Transverse colon (tissue), 4 donors: ENCODE measurements at regions of chr5 and their contacts with region 1.

Region 1: GRCh38 chr5:177094224-177095087 is 7.7 kb downstream of the FGFR4 start:
- DNase-seq: peak; percentile 73
- H3K4me3 ChIP-seq: no peak overlapping the region
- H3K27ac ChIP-seq: peak overlapping the region; percentile 49 to 72 (median 66)
- H3K4me1 ChIP-seq: peaks cover 2 to 51% (median 33%) of the 10 kb centered on the region in 4 donors
- H3K27me3 ChIP-seq: no peaks in the 10 kb centered on the region
- CTCF ChIP-seq: no peak
- EP300 ChIP-seq: no peak
- POLR2A ChIP-seq: no peak

Region 2: DNA sequence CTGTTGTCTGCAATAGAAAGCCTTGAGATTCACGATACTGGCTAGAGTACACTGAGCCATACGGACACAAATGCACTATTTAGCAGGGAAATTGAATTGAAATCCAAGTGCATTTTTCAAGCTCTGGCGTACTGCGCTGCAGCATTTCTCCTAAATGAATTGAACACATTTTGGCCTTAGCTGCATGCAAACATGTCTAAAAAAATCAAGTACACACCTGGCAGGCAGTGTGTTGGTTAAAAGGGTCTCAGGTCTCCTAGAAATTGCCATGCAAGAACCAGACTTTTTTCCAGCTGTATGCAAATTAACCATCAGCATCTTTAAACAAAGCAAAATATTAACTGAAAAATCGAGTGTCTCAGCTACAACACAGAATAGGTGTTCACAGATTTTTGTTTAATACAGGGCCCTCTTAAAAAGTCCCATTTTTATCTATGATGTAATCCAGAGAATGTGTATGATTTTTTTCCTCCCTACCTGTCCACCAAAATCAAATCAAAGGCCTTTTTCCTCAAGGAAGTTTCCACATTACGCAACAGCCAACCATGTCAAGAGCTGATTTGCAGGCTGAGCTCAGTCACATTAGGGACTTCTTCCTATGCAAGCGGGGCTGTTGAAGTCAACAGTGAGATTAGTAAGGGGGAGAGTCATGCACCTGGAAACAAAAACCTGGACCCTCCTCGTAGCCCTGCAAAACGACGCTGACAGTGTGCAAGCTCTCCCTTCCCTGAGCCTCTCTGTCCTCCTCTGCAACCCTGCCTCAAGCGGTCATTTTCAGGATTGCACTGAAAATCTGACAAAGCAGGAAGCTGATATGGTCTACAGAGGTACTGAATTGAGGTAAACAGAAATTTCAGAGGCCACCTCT is 1630.1 kb before region 1 on chr5:
- in situ Hi-C with region 1: no loop called
- intact Hi-C with region 1: loop called (anchors 10 kb)
- DNase-seq: peak; percentile 59
- H3K4me3 ChIP-seq: no peak overlapping the region
- H3K27ac ChIP-seq: no peak overlapping the region
- H3K4me1 ChIP-seq: peaks cover 0 to 5% (median 0%) of the 10 kb centered on the region in 4 donors
- H3K27me3 ChIP-seq: no peaks in the 10 kb centered on the region
- CTCF ChIP-seq: peak; percentile 57 to 74 (median 66)
- EP300 ChIP-seq: no peak
- POLR2A ChIP-seq: no peak

Region 3: DNA sequence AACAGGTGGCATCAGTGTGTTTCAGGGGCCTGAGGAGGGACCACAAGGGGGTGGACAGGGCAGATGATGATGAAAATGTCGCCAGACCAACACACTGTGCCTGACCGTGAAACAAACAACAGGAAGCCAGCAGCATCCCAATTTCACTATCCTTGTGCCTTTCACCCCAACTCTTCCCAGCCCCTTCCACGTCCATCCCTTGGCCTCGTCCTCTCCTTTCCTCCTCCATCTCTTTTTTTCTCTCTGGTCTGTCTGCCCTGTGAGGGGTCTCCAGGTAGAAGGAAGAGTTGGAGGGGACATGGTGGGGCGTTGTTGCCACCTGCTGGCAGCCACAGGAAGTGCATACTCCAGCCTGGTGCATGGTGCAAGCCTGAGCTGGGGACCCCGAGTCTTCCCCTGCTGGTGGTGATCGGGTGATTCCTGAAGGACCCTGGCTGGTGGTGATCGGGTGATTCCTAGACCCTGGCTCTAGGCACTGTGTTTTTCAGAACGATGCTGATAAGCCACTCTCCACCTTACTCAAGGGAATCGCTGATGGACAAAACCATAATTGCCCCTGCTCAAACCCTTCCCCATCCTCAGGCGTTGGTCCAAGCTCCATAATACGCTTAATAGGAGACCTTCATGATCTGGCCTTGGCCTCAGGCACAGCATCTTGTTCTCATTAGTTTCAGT is 17.4 kb after region 1 on chr5:
- in situ Hi-C with region 1: no loop called
- intact Hi-C with region 1: no loop called
- DNase-seq: peak; percentile 60
- H3K4me3 ChIP-seq: no peak overlapping the region
- H3K27ac ChIP-seq: no peak overlapping the region
- H3K4me1 ChIP-seq: peaks cover 0 to 16% (median 7%) of the 10 kb centered on the region in 4 donors
- H3K27me3 ChIP-seq: no peaks in the 10 kb centered on the region
- CTCF ChIP-seq: peak; percentile 93 to 98 (median 93)
- EP300 ChIP-seq: no peak
- POLR2A ChIP-seq: no peak

Region 4: DNA sequence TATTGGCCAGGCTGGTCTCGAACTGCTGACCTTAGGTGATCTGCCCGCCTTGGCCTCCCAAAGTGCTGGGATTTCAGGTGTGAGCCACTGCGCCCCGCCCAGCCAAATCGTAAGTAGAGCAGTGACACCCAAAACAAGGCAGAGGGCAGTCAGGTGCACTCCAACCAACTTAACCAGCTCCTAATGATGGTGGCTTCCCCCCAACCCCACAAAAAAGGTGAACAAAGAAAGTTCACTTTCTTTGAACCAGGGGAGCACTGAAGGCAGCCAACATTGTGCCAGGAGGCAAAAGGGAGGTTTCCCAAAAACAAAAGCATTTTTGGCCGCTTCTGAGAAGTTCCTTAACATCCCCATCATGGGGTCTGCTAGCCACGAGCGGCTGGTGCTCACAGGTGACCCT is 1083.1 kb after region 1 on chr5:
- in situ Hi-C with region 1: no loop called
- intact Hi-C with region 1: no loop called
- DNase-seq: no peak
- H3K4me3 ChIP-seq: no peak overlapping the region
- H3K27ac ChIP-seq: no peak overlapping the region
- H3K4me1 ChIP-seq: no peaks in the 10 kb centered on the region
- H3K27me3 ChIP-seq: no peaks in the 10 kb centered on the region
- CTCF ChIP-seq: no peak
- EP300 ChIP-seq: no peak
- POLR2A ChIP-seq: no peak